A549 (cell line): ENCODE measurements at regions of chr11 and their contacts with region 1.

Region 1: GRCh38 chr11:62108017-62108750 is 15.6 kb upstream of the INCENP start:
- DNase-seq: peak; percentile 49 to 74
- ATAC-seq: peak; percentile 73 to 82; a peak in 4 of 6 replicates
- H3K4me3 ChIP-seq: no peak overlapping the region
- H3K27ac ChIP-seq: peak overlapping the region in 1 of 2 experiments; percentile 29; a peak in 2 of 6 replicates
- H3K4me1 ChIP-seq: peaks cover 13% of the 10 kb centered on the region; the same call in 1 of the 3 replicates
- CTCF ChIP-seq: peak; percentile 93
- EP300 ChIP-seq: no peak
- POLR2A ChIP-seq: no peak
- RAD21 ChIP-seq: peak; percentile 91 to 96

Region 2: GRCh38 chr11:61747192-61747966 is 360.8 kb before region 1 on chr11:
- CTCF ChIA-PET with region 1: interaction called, 38 read pairs
- POLR2A ChIA-PET with region 1: no interaction called
- DNase-seq: peak; percentile 78 to 79
- ATAC-seq: peak; percentile 76 to 93
- H3K4me3 ChIP-seq: no peak overlapping the region
- H3K27ac ChIP-seq: peak overlapping the region; percentile 40 to 70; a peak in 5 of 6 replicates
- H3K4me1 ChIP-seq: peaks cover 14% of the 10 kb centered on the region
- CTCF ChIP-seq: peak; percentile 89
- EP300 ChIP-seq: no peak
- POLR2A ChIP-seq: no peak
- RAD21 ChIP-seq: peak; percentile 88 to 91

Region 3: DNA sequence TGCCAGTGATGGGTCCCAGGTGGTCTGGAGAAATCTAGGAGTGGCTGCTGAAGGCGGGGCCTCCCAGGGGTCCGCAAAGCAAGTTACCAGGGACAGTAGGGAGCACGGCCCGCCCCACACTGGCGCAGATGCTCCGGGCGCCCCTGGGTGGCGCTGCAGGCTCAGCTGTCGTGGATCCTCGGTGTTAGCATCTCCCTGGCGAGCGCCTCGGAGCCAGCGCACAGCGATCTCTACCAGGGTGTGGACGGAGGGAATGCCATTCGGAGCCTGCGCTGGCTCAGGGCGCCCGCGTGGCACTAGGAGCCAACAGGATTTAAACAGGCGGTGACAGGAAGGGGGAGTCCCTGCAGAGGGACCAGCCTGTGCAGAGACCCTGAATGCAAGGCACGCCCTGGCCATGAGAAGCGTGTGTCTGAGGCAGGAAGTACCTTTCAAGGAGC is 237.0 kb before region 1 on chr11:
- CTCF ChIA-PET with region 1: interaction called, 80 read pairs
- POLR2A ChIA-PET with region 1: no interaction called
- DNase-seq: peak; percentile 82 to 91
- ATAC-seq: peak; percentile 80 to 93
- H3K4me3 ChIP-seq: no peak overlapping the region
- H3K27ac ChIP-seq: peak overlapping the region; percentile 47 to 52; a peak in 5 of 6 replicates
- H3K4me1 ChIP-seq: peaks cover 31% of the 10 kb centered on the region
- CTCF ChIP-seq: peak; percentile 95
- EP300 ChIP-seq: no peak
- POLR2A ChIP-seq: no peak
- RAD21 ChIP-seq: peak; percentile 95 to 97

Region 4: GRCh38 chr11:61912530-61912898 is 195.7 kb before region 1 on chr11:
- CTCF ChIA-PET with region 1: interaction called, 11 read pairs
- POLR2A ChIA-PET with region 1: no interaction called
- DNase-seq: no peak
- ATAC-seq: no peak
- H3K4me3 ChIP-seq: no peak overlapping the region
- H3K27ac ChIP-seq: no peak overlapping the region
- H3K4me1 ChIP-seq: peaks cover 5% of the 10 kb centered on the region; the same call in 1 of the 3 replicates
- CTCF ChIP-seq: no peak
- EP300 ChIP-seq: no peak
- POLR2A ChIP-seq: no peak
- RAD21 ChIP-seq: no peak

Region 5: DNA sequence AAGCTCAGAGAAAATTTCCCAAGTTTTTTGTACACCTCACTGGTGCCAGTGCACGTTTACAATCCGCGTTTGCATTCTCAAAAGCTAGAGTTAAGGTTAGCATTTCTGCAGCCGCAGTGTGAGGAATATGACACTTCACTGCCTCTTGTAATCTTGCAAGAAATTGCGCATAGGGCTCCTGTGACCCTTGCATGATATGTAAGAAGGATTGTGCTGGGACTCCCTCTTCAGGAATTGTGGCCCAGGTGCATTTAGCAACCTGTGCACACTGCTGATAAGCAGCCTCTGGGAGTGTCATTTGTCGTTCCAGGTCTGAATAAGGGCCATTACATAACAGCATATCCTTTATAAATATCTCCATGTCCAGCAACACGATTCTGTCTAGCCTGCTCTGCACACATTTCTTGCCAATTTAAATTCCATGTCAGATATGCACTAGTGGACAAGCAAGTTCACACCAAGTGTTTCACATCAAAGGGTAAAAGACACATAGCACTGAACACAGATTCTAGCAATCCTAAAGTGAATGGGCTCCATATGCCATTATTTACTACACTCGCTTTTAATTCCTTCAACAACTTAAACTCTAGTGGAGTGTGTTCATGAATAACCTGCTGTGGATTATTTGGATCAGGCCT is 53.6 kb before region 1 on chr11:
- CTCF ChIA-PET with region 1: interaction called, 11 read pairs
- POLR2A ChIA-PET with region 1: no interaction called
- DNase-seq: peak; percentile 53 to 92
- ATAC-seq: peak; percentile 94 to 99
- H3K4me3 ChIP-seq: no peak overlapping the region
- H3K27ac ChIP-seq: peak overlapping the region; percentile 79 to 87
- H3K4me1 ChIP-seq: peaks cover 16% of the 10 kb centered on the region
- CTCF ChIP-seq: peak; percentile 91
- EP300 ChIP-seq: no peak
- POLR2A ChIP-seq: no peak
- RAD21 ChIP-seq: peak; percentile 97 to 98

Region 6: DNA sequence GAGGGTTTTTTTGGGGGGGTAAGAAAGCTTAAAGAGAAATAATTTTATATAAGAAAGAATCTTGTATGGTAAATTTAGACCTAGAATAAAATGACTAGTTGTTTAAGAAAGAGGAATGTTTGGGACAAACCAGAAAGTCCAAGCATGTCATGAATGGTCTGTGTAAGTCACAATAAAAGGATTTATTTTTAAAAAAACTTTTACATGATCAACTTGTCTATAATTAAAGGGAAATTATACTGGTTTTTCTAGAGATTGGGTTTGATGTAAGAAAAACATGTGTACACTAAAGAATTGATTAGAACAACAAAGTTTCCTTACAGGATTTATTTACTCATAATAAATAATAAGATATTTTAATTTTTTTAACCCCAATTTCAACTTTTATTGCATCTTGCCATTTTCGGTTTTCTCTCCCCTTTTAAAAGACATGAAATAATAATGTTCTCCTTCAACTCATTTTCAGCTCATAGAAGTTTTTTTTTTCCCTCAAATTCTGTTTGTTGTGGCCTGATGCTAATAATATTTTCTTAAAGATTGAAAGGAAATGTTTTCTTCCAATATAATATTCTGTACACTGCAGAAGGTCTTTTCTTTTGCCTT is 19.8 kb before region 1 on chr11:
- CTCF ChIA-PET with region 1: interaction called, 39 read pairs
- POLR2A ChIA-PET with region 1: no interaction called
- DNase-seq: peak in 1 of 2 experiments; percentile 28
- ATAC-seq: no peak
- H3K4me3 ChIP-seq: no peak overlapping the region
- H3K27ac ChIP-seq: no peak overlapping the region
- H3K4me1 ChIP-seq: no peaks in the 10 kb centered on the region
- CTCF ChIP-seq: no peak
- EP300 ChIP-seq: no peak
- POLR2A ChIP-seq: no peak
- RAD21 ChIP-seq: no peak

Region 7: GRCh38 chr11:62132188-62132587 is 24.0 kb after region 1 on chr11:
- CTCF ChIA-PET with region 1: interaction called, 23 read pairs
- POLR2A ChIA-PET with region 1: no interaction called
- DNase-seq: no peak
- ATAC-seq: 0 out of 6 replicates have a peak, but pooled peaks of 1 of the 2 experiments have one; percentile 19
- H3K4me3 ChIP-seq: no peak overlapping the region
- H3K27ac ChIP-seq: no peak overlapping the region
- H3K4me1 ChIP-seq: peaks cover 6% of the 10 kb centered on the region; the same call in 1 of the 3 replicates
- CTCF ChIP-seq: no peak
- EP300 ChIP-seq: no peak
- POLR2A ChIP-seq: no peak
- RAD21 ChIP-seq: no peak

Region 8: DNA sequence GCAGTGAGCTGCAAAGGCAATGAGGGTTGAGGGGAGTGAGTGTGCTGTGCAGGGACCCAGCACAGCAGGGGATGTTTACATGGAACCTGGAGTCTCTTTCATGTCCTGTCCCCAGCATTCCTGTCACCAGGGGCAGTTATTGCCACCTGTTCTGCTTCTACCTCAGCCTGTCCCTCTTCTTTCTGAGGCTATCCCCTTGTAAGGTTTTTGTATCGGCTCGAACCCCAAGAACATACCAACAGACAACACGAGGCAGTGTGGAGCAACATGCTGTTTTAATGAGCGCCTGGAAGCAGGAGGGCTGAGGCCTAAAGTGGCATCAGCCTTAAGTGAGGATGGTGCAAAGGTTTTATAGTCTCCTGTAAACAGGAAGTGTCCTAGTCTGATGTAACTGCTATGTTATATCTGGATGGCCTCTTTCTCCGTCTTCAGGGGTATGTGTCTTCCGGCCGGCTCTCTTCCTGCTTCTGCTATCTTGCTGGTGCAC is 165.6 kb after region 1 on chr11:
- CTCF ChIA-PET with region 1: no interaction called
- POLR2A ChIA-PET with region 1: no interaction called
- DNase-seq: no peak
- ATAC-seq: no peak
- H3K4me3 ChIP-seq: no peak overlapping the region
- H3K27ac ChIP-seq: no peak overlapping the region
- H3K4me1 ChIP-seq: no peaks in the 10 kb centered on the region
- CTCF ChIP-seq: no peak
- EP300 ChIP-seq: no peak
- POLR2A ChIP-seq: no peak
- RAD21 ChIP-seq: no peak